OCI-LY7 (cell line): ENCODE measurements at regions of chr7 and their contacts with region 1.

Region 1: GRCh38 chr7:24401628-24402593 is 117.9 kb downstream of the NPY start:
- DNase-seq: peak; percentile 49
- H3K4me3 ChIP-seq: no peak overlapping the region
- H3K27ac ChIP-seq: no peak overlapping the region
- H3K4me1 ChIP-seq: no peaks in the 10 kb centered on the region
- CTCF ChIP-seq: peak; percentile 76

Region 2: DNA sequence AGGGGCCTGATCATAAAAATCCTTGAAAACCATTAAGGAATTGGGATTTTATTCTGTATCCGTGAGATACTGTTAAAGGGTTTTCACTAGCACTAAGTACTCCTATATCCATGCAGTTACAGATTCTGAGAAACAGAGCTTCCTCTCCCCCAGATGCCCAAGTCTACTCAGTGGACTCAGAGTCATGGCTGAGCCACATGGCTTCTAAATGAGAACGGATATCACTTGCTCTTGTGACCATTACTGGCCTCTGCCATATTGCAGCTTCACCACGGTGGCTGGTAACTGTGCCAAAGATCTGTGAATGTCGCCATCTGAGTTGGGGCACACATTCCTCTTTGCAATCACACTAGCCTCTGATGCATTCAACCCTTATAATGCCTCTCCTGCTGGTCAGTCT is 129.3 kb after region 1 on chr7:
- CTCF ChIA-PET with region 1: no interaction called
- POLR2A ChIA-PET with region 1: no interaction called
- intact Hi-C with region 1: no loop called
- DNase-seq: no peak
- H3K4me3 ChIP-seq: no peak overlapping the region
- H3K27ac ChIP-seq: no peak overlapping the region
- H3K4me1 ChIP-seq: no peaks in the 10 kb centered on the region
- CTCF ChIP-seq: no peak

Region 3: DNA sequence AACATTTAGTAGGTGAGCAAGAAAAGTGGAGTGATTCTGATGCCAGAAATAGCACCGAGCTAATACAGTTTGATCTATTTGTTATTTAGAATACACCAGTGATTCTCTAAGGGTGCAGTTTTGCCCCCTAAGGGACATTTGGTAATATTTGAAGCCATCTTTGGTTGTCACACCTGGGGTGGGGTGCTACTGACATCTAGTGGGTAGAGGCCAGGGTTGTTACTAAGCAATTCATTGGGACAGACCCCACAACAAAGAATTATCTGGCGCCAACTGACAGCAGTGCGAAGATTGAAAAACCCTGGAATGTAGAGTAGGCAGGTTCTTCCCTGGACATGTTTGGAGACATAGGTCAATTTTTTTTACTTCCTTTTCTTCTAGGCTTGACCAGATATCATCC is 185.9 kb after region 1 on chr7:
- CTCF ChIA-PET with region 1: no interaction called
- POLR2A ChIA-PET with region 1: no interaction called
- intact Hi-C with region 1: loop called (anchors 2 kb)
- DNase-seq: peak; percentile 71
- H3K4me3 ChIP-seq: no peak overlapping the region
- H3K27ac ChIP-seq: no peak overlapping the region
- H3K4me1 ChIP-seq: peaks cover 23% of the 10 kb centered on the region
- CTCF ChIP-seq: peak; percentile 96

Region 4: GRCh38 chr7:24722386-24723177 is 320.7 kb after region 1 on chr7:
- CTCF ChIA-PET with region 1: no interaction called
- POLR2A ChIA-PET with region 1: no interaction called
- intact Hi-C with region 1: loop called (anchors 5 kb)
- DNase-seq: peak; percentile 24
- H3K4me3 ChIP-seq: no peak overlapping the region
- H3K27ac ChIP-seq: no peak overlapping the region
- H3K4me1 ChIP-seq: peaks cover 51% of the 10 kb centered on the region
- CTCF ChIP-seq: peak; percentile 62